ENCODE measurements at regions of chr18 and their contacts with region 1.

Region 1: GRCh38 chr18:25341831-25342230 is 10.1 kb downstream of the ZNF521 start:
- DNase-seq: no peak
- ATAC-seq: no peak
- H3K4me3 ChIP-seq: no peak overlapping the region
- H3K27ac ChIP-seq: no peak overlapping the region
- H3K4me1 ChIP-seq: peaks cover 0 to 32% (median 23%) of the 10 kb centered on the region in 9 donors
- H3K27me3 ChIP-seq: peaks cover 0 to 6% (median 0%) of the 10 kb centered on the region in 7 donors
- CTCF ChIP-seq: no peak

Region 2: GRCh38 chr18:25239581-25240419 is 102.0 kb before region 1 on chr18:
- intact Hi-C with region 1: loop called in 3 of 10 experiments (anchors 5 kb)
- DNase-seq: no peak
- ATAC-seq: peak in 4 of 8 donors; percentile 18 to 51 (median 27)
- H3K4me3 ChIP-seq: no peak overlapping the region
- H3K27ac ChIP-seq: peak overlapping the region in 3 of 10 donors; percentile 0 to 45 (median 22)
- H3K4me1 ChIP-seq: peaks cover 0 to 61% (median 31%) of the 10 kb centered on the region in 9 donors
- H3K27me3 ChIP-seq: no peaks in the 10 kb centered on the region
- CTCF ChIP-seq: no peak

Region 3: GRCh38 chr18:25392192-25392591 is 50.4 kb after region 1 on chr18:
- intact Hi-C with region 1: no loop called
- DNase-seq: no peak
- ATAC-seq: no peak
- H3K4me3 ChIP-seq: no peak overlapping the region
- H3K27ac ChIP-seq: no peak overlapping the region
- H3K4me1 ChIP-seq: no peaks in the 10 kb centered on the region
- H3K27me3 ChIP-seq: no peaks in the 10 kb centered on the region
- CTCF ChIP-seq: no peak

Region 4: DNA sequence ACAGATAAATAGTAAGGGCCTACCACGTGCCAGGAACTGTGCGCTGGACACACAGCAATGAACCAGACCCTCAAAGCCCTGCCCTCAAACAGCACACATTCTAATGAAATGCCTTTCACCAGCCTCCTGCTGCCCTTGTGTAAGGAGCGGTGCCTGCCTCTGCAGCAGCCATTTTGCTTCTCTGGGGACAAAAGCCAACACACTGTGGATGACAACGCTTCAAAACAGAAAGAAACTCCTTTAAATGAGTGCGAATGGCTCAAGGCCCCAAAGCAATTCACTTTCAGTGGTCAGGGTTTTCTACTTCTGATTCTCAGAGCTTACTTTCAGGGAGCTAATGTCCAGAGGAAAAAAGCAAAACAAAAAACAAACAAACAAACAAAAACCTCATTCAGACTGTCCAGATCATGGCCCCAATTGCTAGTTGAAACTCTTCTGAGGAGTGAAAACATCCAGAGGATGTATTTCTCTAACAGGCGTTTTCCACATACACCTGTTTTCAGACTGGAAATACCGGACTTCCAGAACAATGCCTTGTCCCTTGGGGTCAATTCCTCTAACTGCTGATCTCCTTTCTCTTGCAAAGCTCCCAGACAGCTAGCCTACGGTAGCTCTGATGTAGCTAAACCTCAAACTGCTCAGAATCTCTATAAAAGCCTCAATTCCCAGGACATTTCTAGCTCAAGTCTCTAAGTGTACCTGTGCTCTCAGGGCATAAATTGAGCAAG is 333.5 kb after region 1 on chr18:
- intact Hi-C with region 1: no loop called
- DNase-seq: no peak
- ATAC-seq: no peak
- H3K4me3 ChIP-seq: no peak overlapping the region
- H3K27ac ChIP-seq: no peak overlapping the region
- H3K4me1 ChIP-seq: no peaks in the 10 kb centered on the region
- H3K27me3 ChIP-seq: peaks cover 0 to 4% (median 0%) of the 10 kb centered on the region in 7 donors
- CTCF ChIP-seq: no peak

Measured in heart right ventricle (tissue), 16 donors.